ENCODE measurements at regions of chr14 and their contacts with region 1.

Region 1: GRCh38 chr14:74508292-74508731 is 14.7 kb downstream of the ISCA2 start:
- DNase-seq: peak in 1 of 7 donors; percentile 14
- H3K4me3 ChIP-seq: no peak overlapping the region
- H3K27ac ChIP-seq: no peak overlapping the region
- H3K4me1 ChIP-seq: no peaks in the 10 kb centered on the region
- H3K27me3 ChIP-seq: no peaks in the 10 kb centered on the region
- CTCF ChIP-seq: no peak
- POLR2A ChIP-seq: no peak

Region 2: DNA sequence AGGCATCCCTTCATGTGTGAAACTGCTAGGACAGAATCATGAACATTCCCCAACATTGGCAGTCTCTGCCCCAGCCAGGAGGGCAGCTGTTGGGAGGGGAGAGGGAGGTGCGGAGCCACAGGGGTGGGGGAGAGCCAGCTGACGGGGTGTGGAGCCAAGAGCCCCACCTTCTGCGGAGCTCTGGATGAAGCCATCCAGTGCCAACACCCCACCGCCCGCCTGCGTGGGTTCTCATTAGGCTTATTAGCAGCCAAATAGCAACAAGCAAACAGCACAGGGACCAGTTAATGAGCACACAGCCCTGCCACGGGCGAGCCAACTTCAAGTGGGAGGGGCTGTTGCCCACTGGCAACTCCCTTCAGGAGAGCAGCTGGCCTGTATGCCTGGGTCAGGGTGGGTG is 91.6 kb after region 1 on chr14:
- intact Hi-C with region 1: loop called in 1 of 2 experiments (anchors 5 kb)
- DNase-seq: no peak
- H3K4me3 ChIP-seq: no peak overlapping the region
- H3K27ac ChIP-seq: peak overlapping the region in 1 of 5 donors; percentile 7
- H3K4me1 ChIP-seq: no peaks in the 10 kb centered on the region
- H3K27me3 ChIP-seq: no peaks in the 10 kb centered on the region
- CTCF ChIP-seq: no peak
- POLR2A ChIP-seq: no peak

Measured in adrenal gland (tissue), 19 donors.